ENCODE measurements at regions of chr10 and their contacts with region 1.

Region 1: DNA sequence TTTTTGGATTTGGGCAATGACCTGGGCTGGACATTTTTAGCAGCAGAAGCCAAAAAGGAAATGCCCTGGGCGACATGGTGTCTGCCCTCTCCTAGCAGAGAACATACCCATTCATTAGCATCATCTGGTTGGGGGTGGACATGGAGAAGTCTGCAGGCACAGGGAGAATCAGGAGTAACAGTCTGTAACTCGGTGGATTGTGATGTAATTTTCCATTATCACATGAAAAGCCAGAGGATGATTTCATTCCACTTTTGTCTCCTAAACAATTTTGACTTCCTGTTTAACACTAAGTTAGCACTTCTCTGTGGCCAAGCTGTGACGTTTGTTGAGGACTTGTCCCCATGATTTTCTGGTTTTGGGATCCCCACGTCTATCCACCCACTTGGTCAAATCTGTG is 153.8 kb upstream of the HABP2 start:
- ATAC-seq: peak in 3 of 8 experiments; percentile 23 to 61 (median 30)
- H3K4me3 ChIP-seq: no peak overlapping the region
- H3K27ac ChIP-seq: no peak overlapping the region
- H3K4me1 ChIP-seq: no peaks in the 10 kb centered on the region

Region 2: GRCh38 chr10:113007032-113007771 is 391.9 kb before region 1 on chr10:
- in situ Hi-C with region 1: no loop called
- ATAC-seq: peak in 1 of 8 experiments; percentile 5
- H3K4me3 ChIP-seq: no peak overlapping the region
- H3K27ac ChIP-seq: no peak overlapping the region
- H3K4me1 ChIP-seq: peaks cover 4 to 10% of the 10 kb centered on the region in 2 donors

Region 3: GRCh38 chr10:113045147-113046055 is 353.7 kb before region 1 on chr10:
- in situ Hi-C with region 1: no loop called
- ATAC-seq: peak in 3 of 8 experiments; percentile 33 to 91 (median 80)
- H3K4me3 ChIP-seq: no peak overlapping the region
- H3K27ac ChIP-seq: no peak overlapping the region
- H3K4me1 ChIP-seq: peaks cover 9 to 13% of the 10 kb centered on the region in 2 donors

Region 4: GRCh38 chr10:113539789-113540188 is 140.7 kb after region 1 on chr10:
- in situ Hi-C with region 1: loop called in 1 of 9 experiments (anchors 10 kb)
- ATAC-seq: peak in 7 of 8 experiments; percentile 77 to 94 (median 88)
- H3K4me3 ChIP-seq: no peak overlapping the region
- H3K27ac ChIP-seq: no peak overlapping the region
- H3K4me1 ChIP-seq: peaks cover 0 to 8% of the 10 kb centered on the region in 2 donors

Measured in motor neuron (in vitro differentiated cells).